HCT116 (cell line): ENCODE measurements at regions of chr9 and their contacts with region 1.

Region 1: GRCh38 chr9:128053560-128053959 is 13.6 kb downstream of the NAIF1 start:
- DNase-seq: no peak
- ATAC-seq: no peak
- H3K4me3 ChIP-seq: no peak overlapping the region
- H3K27ac ChIP-seq: no peak overlapping the region
- H3K4me1 ChIP-seq: peaks cover 43 to 66% of the 10 kb centered on the region in 2 experiments
- H3K27me3 ChIP-seq: no peaks in the 10 kb centered on the region
- CTCF ChIP-seq: no peak
- POLR2A ChIP-seq: no peak
- RAD21 ChIP-seq: no peak

Region 2: GRCh38 chr9:127370672-127371648 is 682.6 kb before region 1 on chr9:
- CTCF ChIA-PET with region 1: no interaction called
- POLR2A ChIA-PET with region 1: no interaction called
- RAD21 ChIA-PET with region 1: no interaction called
- intact Hi-C with region 1: no loop called
- DNase-seq: no peak
- ATAC-seq: no peak
- H3K4me3 ChIP-seq: no peak overlapping the region
- H3K27ac ChIP-seq: no peak overlapping the region
- H3K4me1 ChIP-seq: no peaks in the 10 kb centered on the region
- H3K27me3 ChIP-seq: no peaks in the 10 kb centered on the region
- CTCF ChIP-seq: no peak
- POLR2A ChIP-seq: no peak
- RAD21 ChIP-seq: no peak

Region 3: DNA sequence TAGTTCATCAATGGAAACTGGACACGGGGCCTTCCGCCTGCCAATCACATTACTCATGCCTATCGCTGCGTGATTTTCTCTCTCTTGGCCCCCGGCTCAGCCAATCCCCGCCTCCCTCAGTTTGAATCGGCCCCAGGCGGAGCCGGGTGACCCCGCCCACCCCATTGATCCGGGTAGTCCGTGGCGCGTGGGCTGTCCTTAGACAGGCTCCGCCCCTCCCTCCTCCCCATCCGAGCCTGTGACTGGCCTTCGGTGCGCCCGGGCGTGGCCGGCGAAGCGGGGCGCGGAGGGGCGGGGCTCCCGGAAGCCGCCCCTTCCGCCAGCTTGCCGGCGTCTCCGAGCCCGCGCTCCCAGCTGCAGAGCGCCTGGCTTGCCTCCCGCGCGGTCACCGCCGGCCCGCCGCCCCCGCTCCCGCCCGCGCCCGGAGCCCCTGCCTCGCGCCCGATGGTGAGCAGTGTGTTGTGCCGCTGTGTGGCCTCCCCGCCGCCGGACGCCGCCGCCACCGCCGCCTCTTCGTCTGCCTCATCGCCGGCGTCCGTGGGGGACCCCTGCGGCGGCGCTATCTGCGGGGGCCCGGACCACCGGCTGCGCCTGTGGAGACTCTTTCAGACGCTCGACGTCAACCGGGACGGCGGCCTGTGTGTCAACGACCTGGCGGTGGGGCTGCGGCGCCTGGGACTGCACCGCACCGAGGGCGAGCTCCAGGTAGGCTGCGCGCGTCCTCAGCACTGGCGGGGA is 14.5 kb after region 1 on chr9 and contains the start of gene SLC25A25:
- CTCF ChIA-PET with region 1: interaction called, 9 read pairs
- POLR2A ChIA-PET with region 1: interaction called, 14 read pairs
- RAD21 ChIA-PET with region 1: no interaction called
- intact Hi-C with region 1: no loop called
- DNase-seq: peak; percentile 97
- ATAC-seq: peak; percentile 86
- H3K4me3 ChIP-seq: peak within 1 kb of the TSS; percentile 81 to 85
- H3K27ac ChIP-seq: peak within 1 kb of the TSS; percentile 95
- H3K4me1 ChIP-seq: peaks cover 36 to 48% of the 10 kb centered on the region in 2 experiments
- H3K27me3 ChIP-seq: no peaks in the 10 kb centered on the region
- CTCF ChIP-seq: no peak
- POLR2A ChIP-seq: no peak
- RAD21 ChIP-seq: no peak
- total RNA-seq, gene SLC25A25: 15.3 TPM

Region 4: GRCh38 chr9:128361986-128362646 is 308.6 kb after region 1 on chr9:
- CTCF ChIA-PET with region 1: no interaction called
- POLR2A ChIA-PET with region 1: no interaction called
- RAD21 ChIA-PET with region 1: no interaction called
- intact Hi-C with region 1: no loop called
- DNase-seq: peak; percentile 59
- ATAC-seq: peak; percentile 92
- H3K4me3 ChIP-seq: peak overlapping the region; percentile 25 to 33
- H3K27ac ChIP-seq: peak overlapping the region; percentile 29
- H3K4me1 ChIP-seq: peaks cover 7 to 28% of the 10 kb centered on the region in 2 experiments; a peak in 3 of 4 replicates
- H3K27me3 ChIP-seq: no peaks in the 10 kb centered on the region
- CTCF ChIP-seq: peak in 2 of 3 experiments; percentile 85 to 88; a peak in 4 of 6 replicates
- POLR2A ChIP-seq: no peak
- RAD21 ChIP-seq: no peak